ENCODE measurements at regions of chr11 and their contacts with region 1.

Region 1: DNA sequence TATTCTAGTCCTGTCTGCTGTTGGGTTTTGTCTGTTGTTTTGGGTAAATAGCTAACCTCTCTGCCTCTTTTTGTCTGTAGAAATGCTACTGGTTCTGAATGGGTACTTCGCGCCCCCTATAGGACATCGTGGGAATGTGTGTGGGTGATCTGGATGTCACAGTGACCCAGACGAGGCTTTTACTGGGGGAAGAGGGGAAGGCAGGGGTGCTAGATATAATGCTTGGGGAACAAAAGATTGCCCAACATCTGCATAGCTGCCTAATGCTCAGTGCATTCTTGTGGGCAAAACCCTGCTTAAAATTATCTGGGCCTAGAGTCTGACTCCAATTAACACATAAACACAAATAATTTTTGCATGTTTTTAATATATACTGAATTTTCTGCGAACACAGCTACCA is 57.7 kb downstream of the BMAL1 start:
- DNase-seq: no peak
- H3K4me3 ChIP-seq: no peak overlapping the region
- H3K27me3 ChIP-seq: no peaks in the 10 kb centered on the region
- CTCF ChIP-seq: peak; percentile 90

Region 2: GRCh38 chr11:13210424-13210823 is 124.9 kb before region 1 on chr11:
- CTCF ChIA-PET with region 1: interaction called, 93 read pairs
- POLR2A ChIA-PET with region 1: no interaction called
- DNase-seq: peak; percentile 26
- H3K4me3 ChIP-seq: no peak overlapping the region
- H3K27me3 ChIP-seq: no peaks in the 10 kb centered on the region
- CTCF ChIP-seq: peak; percentile 55

Region 3: DNA sequence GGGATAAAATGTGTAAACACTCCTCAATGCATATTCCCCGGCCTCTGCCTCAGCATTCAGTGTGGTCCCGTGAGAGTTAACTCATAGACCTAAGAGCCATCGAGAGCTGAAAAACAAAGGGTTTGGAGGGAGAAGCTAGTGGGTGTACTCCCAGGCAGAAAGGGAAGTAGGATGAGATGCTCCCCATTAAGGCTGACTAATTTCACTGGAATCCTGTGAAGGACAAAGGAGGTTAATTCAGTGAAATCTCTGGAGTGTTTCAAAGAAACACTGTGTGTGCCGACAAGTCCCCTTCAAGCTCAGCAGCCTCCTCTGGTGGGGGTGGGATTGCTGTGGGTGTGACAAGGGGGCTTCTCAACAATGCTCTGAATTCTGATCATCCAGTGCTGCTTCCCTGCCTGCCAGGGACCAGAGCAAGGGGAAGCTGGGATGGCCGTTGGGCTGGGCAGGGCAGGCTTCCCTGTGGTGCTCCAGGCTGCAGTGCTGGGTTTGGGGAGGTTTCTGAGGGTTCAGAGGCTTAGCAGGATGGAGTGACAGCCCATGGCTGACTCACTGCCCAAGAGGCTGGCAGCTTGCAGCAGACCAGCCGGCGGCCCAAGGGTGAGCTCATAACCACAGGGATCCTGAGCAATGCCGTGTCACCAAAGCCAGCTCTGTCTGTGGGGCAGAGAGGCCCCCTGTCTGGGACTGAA is 119.2 kb before region 1 on chr11:
- CTCF ChIA-PET with region 1: interaction called, 93 read pairs
- POLR2A ChIA-PET with region 1: interaction called, 3 read pairs
- DNase-seq: peak; percentile 80
- H3K4me3 ChIP-seq: no peak overlapping the region
- H3K27me3 ChIP-seq: no peaks in the 10 kb centered on the region
- CTCF ChIP-seq: 0 out of 2 replicates have a peak, but pooled peaks have one; percentile 8

Region 4: DNA sequence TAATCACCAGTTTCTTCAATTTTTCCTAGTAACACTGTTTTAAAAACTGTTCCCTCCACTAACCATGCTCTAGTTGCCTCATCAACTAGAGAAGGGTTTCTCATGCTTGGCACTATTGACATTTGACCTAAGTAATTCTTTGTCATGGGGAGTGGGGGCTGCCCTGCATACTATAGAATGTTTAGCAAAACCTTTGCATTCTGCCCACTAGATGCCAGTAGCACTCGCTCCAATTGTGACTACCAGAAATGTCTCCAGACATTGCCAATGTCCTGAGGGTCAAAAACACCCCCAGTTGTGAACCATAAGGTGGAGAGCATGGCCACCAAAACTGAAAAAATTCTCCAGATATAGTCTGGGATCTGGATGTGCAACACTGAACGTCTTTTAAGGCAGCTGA is 85.3 kb before region 1 on chr11:
- CTCF ChIA-PET with region 1: interaction called, 10 read pairs
- POLR2A ChIA-PET with region 1: no interaction called
- DNase-seq: no peak
- H3K4me3 ChIP-seq: no peak overlapping the region
- H3K27me3 ChIP-seq: peaks cover 2% of the 10 kb centered on the region; the same call in 1 of the 2 replicates
- CTCF ChIP-seq: peak; percentile 34; the same call in 1 of the 2 replicates

Region 5: GRCh38 chr11:13316528-13316961 is 18.8 kb before region 1 on chr11:
- CTCF ChIA-PET with region 1: interaction called, 23 read pairs
- POLR2A ChIA-PET with region 1: no interaction called
- DNase-seq: peak; percentile 40
- H3K4me3 ChIP-seq: no peak overlapping the region
- H3K27me3 ChIP-seq: no peaks in the 10 kb centered on the region; the same call in 1 of the 2 replicates
- CTCF ChIP-seq: no peak

Region 6: GRCh38 chr11:13324709-13325108 is 10.6 kb before region 1 on chr11:
- CTCF ChIA-PET with region 1: interaction called, 21 read pairs
- POLR2A ChIA-PET with region 1: no interaction called
- DNase-seq: no peak
- H3K4me3 ChIP-seq: no peak overlapping the region
- H3K27me3 ChIP-seq: no peaks in the 10 kb centered on the region
- CTCF ChIP-seq: no peak